ENCODE measurements at regions of chr1 and their contacts with region 1.

Region 1: GRCh38 chr1:159132271-159132881 is 39.0 kb upstream of the CADM3 start:
- DNase-seq: peak; percentile 78
- ATAC-seq: peak; percentile 64
- H3K4me3 ChIP-seq: no peak overlapping the region
- H3K27ac ChIP-seq: no peak overlapping the region
- H3K4me1 ChIP-seq: no peaks in the 10 kb centered on the region
- H3K27me3 ChIP-seq: peaks cover 84% of the 10 kb centered on the region
- CTCF ChIP-seq: peak; percentile 94

Region 2: DNA sequence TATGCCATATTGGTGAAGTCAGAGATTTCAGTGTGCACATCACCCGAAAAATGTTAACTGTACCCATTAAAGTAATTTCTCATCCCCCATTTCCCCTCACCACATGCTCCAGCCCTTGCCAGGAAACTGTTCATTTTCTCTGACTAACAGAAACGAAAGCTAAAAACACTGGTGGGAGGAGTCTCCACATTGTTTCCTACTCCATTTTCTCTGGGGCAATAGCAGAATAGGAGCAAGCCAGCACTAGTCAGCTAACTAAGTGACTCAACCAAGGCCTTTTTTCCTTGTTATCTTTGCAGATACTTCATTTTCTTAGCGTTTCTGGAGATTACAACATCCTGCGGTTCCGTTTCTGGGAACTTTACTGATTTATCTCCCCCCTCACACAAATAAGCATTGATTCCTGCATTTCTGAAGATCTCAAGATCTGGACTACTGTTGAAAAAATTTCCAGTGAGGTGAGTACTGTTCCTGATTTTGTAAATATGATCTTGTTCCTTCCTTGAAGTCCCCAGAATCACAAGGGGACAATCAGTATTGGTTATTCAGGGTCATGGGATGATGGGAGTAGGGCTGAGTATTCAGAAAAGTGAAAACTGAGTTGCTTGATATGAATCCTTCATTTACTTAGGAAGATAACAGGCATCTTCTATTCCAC is 122.5 kb before region 1 on chr1 and contains the start of gene IFI16:
- CTCF ChIA-PET with region 1: no interaction called
- POLR2A ChIA-PET with region 1: no interaction called
- intact Hi-C with region 1: no loop called
- DNase-seq: peak; percentile 48
- ATAC-seq: peak; percentile 90
- H3K4me3 ChIP-seq: peak within 1 kb of the TSS; percentile 24
- H3K27ac ChIP-seq: 0 out of 2 replicates have a peak within 1 kb of the TSS, but pooled peaks have one; percentile 4
- H3K4me1 ChIP-seq: 0 out of 2 replicates have a peak, but pooled peaks cover 3% of the 10 kb centered on the region
- H3K27me3 ChIP-seq: peaks cover 11% of the 10 kb centered on the region
- CTCF ChIP-seq: no peak
- total RNA-seq, gene IFI16: 0.98 and 1.3 TPM in 2 replicates

Region 3: GRCh38 chr1:159197561-159198557 is 65.5 kb after region 1 on chr1:
- CTCF ChIA-PET with region 1: interaction called, 7 read pairs
- POLR2A ChIA-PET with region 1: no interaction called
- intact Hi-C with region 1: loop called (anchors 1 kb)
- DNase-seq: peak; percentile 88
- ATAC-seq: peak; percentile 94
- H3K4me3 ChIP-seq: no peak overlapping the region
- H3K27ac ChIP-seq: no peak overlapping the region
- H3K4me1 ChIP-seq: no peaks in the 10 kb centered on the region
- H3K27me3 ChIP-seq: peaks cover 85% of the 10 kb centered on the region
- CTCF ChIP-seq: peak; percentile 91

Region 4: DNA sequence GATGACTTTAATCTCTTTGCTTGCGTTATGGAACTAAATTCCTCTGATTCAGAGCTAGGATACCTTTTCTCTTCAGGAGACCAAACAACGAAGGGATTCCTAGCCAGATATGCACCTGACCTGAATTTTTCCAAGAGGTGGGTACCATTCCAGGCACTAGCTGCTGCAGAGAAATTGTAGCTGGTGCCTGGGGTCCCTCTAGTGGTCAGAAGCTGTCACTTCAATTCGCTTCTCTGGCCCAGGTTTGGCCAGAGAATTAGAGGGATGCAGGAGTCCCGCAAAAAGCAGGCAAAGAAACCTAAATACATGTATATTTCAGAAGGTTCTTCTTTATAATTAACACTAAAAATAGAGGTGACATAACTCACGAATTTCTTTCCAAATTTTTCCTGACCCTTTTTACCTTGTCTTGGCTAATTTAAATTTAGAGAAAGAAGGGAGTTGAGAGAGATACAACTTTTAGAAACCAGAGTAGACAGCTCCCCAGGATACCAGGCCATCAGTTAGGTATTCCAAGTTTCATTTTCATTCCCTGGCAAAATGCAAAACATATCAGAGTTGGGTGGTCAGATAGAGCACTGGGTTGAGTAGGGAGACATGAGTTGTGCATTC is 81.9 kb after region 1 on chr1:
- CTCF ChIA-PET with region 1: no interaction called
- POLR2A ChIA-PET with region 1: no interaction called
- intact Hi-C with region 1: loop called (anchors 2 kb)
- DNase-seq: peak; percentile 72
- ATAC-seq: peak; percentile 74
- H3K4me3 ChIP-seq: no peak overlapping the region
- H3K27ac ChIP-seq: no peak overlapping the region
- H3K4me1 ChIP-seq: peaks cover 4% of the 10 kb centered on the region; the same call in 1 of the 2 replicates
- H3K27me3 ChIP-seq: peaks cover 29% of the 10 kb centered on the region
- CTCF ChIP-seq: peak; percentile 92

Region 5: DNA sequence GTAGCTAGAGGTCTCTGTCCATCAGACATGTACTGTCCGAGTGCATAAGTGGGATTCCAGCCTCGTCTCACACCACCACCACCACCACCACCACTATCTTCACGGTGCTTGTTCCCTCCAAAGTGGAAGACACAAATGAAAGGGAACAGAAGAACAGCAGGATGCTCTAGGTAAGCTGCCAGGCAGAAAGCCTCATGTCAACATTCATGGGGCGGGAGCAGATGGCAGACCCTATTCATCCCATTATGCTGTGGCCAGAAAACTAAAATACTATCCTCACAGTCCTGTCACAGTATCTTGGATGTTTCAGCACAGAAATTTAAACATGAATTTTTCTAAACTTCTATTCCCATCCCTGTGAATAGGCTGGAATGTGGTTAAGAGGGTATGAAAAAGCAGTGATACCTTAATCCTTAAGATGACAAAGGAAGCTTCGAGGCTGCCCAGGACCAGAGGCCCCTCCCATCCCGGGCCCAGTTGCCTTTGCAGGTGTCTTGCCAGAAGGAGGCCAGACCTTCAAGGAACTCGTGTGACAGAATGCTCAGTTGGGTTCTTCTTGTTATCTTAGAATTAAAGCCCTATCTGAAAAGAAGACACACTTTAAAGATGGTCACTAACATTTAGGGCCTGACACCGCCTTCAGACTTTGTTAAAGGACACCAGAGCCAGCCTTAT is 480.0 kb after region 1 on chr1:
- CTCF ChIA-PET with region 1: no interaction called
- POLR2A ChIA-PET with region 1: no interaction called
- intact Hi-C with region 1: no loop called
- DNase-seq: no peak
- ATAC-seq: no peak
- H3K4me3 ChIP-seq: no peak overlapping the region
- H3K27ac ChIP-seq: no peak overlapping the region
- H3K4me1 ChIP-seq: no peaks in the 10 kb centered on the region
- H3K27me3 ChIP-seq: peaks cover 24% of the 10 kb centered on the region
- CTCF ChIP-seq: no peak

Measured in PC-3 (cell line).